ENCODE measurements at regions of chr3 and their contacts with region 1.

Region 1: GRCh38 chr3:133805527-133806475 is at the start of gene SRPRB:
- DNase-seq: peak; percentile 89
- ATAC-seq: peak; percentile 98
- H3K4me3 Mint-ChIP-seq: peak within 1 kb of the TSS; percentile 96
- H3K27ac Mint-ChIP-seq: peak within 1 kb of the TSS; percentile 95
- H3K4me1 Mint-ChIP-seq: peaks cover 21% of the 10 kb centered on the region
- H3K27me3 Mint-ChIP-seq: peaks cover 3% of the 10 kb centered on the region
- CTCF ChIP-seq: no peak
- total RNA-seq, gene SRPRB: 36.5 and 38.5 TPM in 2 replicates

Region 2: GRCh38 chr3:133448478-133449122 is 357.2 kb before region 1 on chr3:
- CTCF ChIA-PET with region 1: no interaction called
- POLR2A ChIA-PET with region 1: no interaction called
- intact Hi-C with region 1: loop called (anchors 2 kb)
- DNase-seq: peak; percentile 40
- ATAC-seq: peak; percentile 88
- H3K4me3 Mint-ChIP-seq: peak overlapping the region; percentile 80
- H3K27ac Mint-ChIP-seq: peak overlapping the region; percentile 95
- H3K4me1 Mint-ChIP-seq: peaks cover 55% of the 10 kb centered on the region
- H3K27me3 Mint-ChIP-seq: peaks cover 6% of the 10 kb centered on the region
- CTCF ChIP-seq: no peak

Region 3: GRCh38 chr3:133661454-133662277 is 144.1 kb before region 1 on chr3 and contains the start of gene TOPBP1:
- CTCF ChIA-PET with region 1: no interaction called
- POLR2A ChIA-PET with region 1: no interaction called
- intact Hi-C with region 1: loop called (anchors 1 kb)
- DNase-seq: peak; percentile 76
- ATAC-seq: peak; percentile 86
- H3K4me3 Mint-ChIP-seq: peak within 1 kb of the TSS; percentile 98
- H3K27ac Mint-ChIP-seq: peak within 1 kb of the TSS; percentile 95
- H3K4me1 Mint-ChIP-seq: peaks cover 34% of the 10 kb centered on the region
- H3K27me3 Mint-ChIP-seq: no peaks in the 10 kb centered on the region
- CTCF ChIP-seq: no peak
- total RNA-seq, gene TOPBP1: 45.8 and 49.9 TPM in 2 replicates

Region 4: DNA sequence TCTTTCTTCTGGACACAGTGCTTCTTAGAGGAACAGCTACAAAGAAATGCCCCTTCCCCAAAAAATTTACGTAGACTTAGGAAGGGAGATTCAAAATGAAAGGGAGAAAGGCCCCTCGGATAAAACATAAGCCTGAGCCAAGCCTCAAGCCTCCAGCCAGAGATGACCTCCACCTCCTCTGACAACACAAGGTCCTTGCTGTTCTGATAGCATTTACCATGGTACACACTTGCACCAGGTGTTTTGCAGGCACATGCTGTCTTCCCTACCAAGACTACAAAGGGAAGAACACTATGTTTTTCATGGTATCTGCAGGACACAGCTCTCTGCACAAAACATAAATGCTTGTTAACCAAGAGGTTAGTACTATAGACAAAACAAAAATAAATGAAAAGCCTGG is 417.0 kb after region 1 on chr3:
- CTCF ChIA-PET with region 1: no interaction called
- POLR2A ChIA-PET with region 1: no interaction called
- intact Hi-C with region 1: loop called (anchors 5 kb)
- DNase-seq: no peak
- ATAC-seq: no peak
- H3K4me3 Mint-ChIP-seq: no peak overlapping the region
- H3K27ac Mint-ChIP-seq: no peak overlapping the region
- H3K4me1 Mint-ChIP-seq: peaks cover 24% of the 10 kb centered on the region
- H3K27me3 Mint-ChIP-seq: no peaks in the 10 kb centered on the region
- CTCF ChIP-seq: no peak

Measured in activated B cell treated with CpG ODN at 0.5 μM for 24 hours (primary cell).